Left cardiac atrium (tissue), 4 donors: ENCODE measurements at regions of chr6 and their contacts with region 1.

Region 1: DNA sequence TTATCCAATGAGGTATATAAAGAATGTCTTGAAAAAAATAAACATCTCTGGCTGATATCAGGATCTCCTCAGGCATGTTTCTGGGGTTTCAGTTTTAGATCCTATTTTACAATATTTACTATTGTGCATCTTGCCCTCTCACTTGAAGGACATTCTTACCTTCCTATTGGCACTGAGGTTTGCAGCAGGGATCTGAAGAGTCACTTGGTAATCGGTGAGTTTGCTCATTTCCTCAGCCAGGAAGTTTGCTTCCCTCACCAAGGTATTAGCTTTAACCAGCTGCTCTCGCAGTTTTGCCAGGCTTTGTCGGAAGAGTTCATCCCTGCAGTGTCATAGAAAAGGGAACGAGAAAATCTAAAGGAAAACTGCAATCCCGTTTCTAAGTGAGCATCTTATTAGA is 101.9 kb upstream of the NUP153 start:
- DNase-seq: no peak
- ATAC-seq: no peak

Region 2: DNA sequence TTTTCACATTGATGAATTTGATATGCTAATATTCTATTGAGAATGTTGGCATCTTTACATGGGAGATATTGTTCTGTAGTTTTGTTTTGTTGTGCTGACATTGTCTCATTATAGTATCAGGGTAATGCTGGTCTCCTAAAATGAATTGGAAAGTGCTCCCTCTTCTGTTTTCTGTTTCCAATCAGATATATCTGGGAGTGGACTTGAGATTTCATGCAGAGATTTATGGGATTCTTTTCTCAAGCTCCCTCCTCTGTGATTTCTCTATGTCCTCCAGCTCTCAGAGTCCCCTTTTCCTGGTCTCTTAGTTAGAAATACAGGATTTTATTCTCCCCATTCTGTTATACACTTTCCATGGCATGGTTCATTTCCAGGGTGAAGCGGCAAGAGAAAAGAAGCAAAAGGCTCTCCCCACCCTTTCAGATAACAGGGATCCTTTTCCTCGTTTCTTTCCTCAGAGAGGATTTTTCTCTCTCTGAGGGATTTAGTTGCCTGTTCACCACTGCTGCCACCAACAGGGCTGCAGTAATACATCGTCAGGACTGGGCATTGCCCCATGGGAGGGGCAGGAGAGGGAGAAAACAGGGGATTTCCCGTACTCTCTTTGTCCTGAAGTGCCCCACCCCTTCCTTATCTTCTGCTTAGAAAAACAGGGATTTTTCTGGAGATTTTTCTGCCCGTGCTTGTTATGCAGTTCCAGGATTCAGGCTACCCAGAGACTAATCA is 766.0 kb before region 1 on chr6:
- intact Hi-C with region 1: no loop called
- DNase-seq: peak; percentile 58
- ATAC-seq: peak; percentile 86 to 91

Region 3: DNA sequence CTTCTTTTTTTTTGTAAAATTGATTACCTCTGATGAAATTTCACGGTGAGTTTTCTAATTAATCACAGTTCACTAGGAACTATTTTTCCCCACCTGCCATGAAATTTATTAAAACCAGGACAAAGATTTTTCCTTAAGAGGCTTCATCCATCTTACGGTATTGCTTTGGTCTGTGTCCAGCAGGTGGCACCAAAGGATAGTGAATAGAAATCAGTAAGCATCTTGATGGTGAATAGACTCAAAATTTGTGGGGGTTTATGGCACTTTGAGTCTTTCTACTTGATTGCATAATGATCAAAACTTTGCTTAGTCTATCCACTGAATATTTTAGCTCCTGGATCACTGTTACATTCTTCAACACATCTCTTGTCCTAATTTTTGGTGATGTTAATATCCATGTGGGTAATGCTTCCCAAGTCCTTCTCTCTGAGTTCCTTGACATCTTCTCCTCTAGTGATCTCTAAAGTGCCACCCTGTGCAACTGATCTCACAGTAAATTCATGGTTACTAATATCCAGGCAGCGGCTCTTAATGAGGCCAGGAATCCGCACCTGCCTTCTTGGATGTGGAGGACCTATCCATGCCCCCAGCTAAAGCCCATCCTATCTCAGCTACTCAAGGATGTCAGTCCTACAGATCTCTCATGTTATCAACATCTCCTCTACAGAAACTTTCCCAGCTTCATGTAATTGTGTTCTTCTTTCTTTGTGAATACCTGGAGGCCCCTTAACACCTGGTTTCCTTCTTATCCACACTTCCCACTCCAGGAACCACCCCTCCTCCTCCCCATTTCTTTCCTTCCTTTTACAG is 652.3 kb before region 1 on chr6:
- intact Hi-C with region 1: loop called (anchors 2 to 10 kb)
- DNase-seq: peak; percentile 54
- ATAC-seq: peak in 1 of 2 donors; percentile 48

Region 4: GRCh38 chr6:17790489-17790888 is 18.1 kb before region 1 on chr6:
- intact Hi-C with region 1: no loop called
- DNase-seq: no peak
- ATAC-seq: no peak

Region 5: GRCh38 chr6:18161431-18161830 is 352.8 kb after region 1 on chr6:
- intact Hi-C with region 1: no loop called
- DNase-seq: no peak
- ATAC-seq: no peak